Activated CD8-positive, alpha-beta T cell treated with anti-CD3 and anti-CD28 coated beads for 36 hours (primary cell): ENCODE measurements at regions of chr9 and their contacts with region 1.

Region 1: GRCh38 chr9:113578882-113579282 is 115.4 kb downstream of the RGS3 start:
- DNase-seq: peak; percentile 96
- ATAC-seq: peak; percentile 71
- H3K4me3 Mint-ChIP-seq: peak overlapping the region; percentile 85
- H3K27ac Mint-ChIP-seq: peak overlapping the region; percentile 95
- H3K4me1 Mint-ChIP-seq: peaks cover 83% of the 10 kb centered on the region
- H3K27me3 Mint-ChIP-seq: no peaks in the 10 kb centered on the region
- CTCF ChIP-seq: no peak

Region 2: GRCh38 chr9:113331780-113332179 is 247.1 kb before region 1 on chr9:
- CTCF ChIA-PET with region 1: no interaction called
- POLR2A ChIA-PET with region 1: no interaction called
- intact Hi-C with region 1: no loop called
- DNase-seq: no peak
- ATAC-seq: no peak
- H3K4me3 Mint-ChIP-seq: no peak overlapping the region
- H3K27ac Mint-ChIP-seq: no peak overlapping the region
- H3K4me1 Mint-ChIP-seq: no peaks in the 10 kb centered on the region
- H3K27me3 Mint-ChIP-seq: no peaks in the 10 kb centered on the region
- CTCF ChIP-seq: no peak

Region 3: GRCh38 chr9:113387560-113388230 is 191.2 kb before region 1 on chr9:
- CTCF ChIA-PET with region 1: no interaction called
- POLR2A ChIA-PET with region 1: no interaction called
- intact Hi-C with region 1: no loop called
- DNase-seq: no peak
- ATAC-seq: no peak
- H3K4me3 Mint-ChIP-seq: no peak overlapping the region
- H3K27ac Mint-ChIP-seq: no peak overlapping the region
- H3K4me1 Mint-ChIP-seq: no peaks in the 10 kb centered on the region
- H3K27me3 Mint-ChIP-seq: no peaks in the 10 kb centered on the region
- CTCF ChIP-seq: no peak

Region 4: DNA sequence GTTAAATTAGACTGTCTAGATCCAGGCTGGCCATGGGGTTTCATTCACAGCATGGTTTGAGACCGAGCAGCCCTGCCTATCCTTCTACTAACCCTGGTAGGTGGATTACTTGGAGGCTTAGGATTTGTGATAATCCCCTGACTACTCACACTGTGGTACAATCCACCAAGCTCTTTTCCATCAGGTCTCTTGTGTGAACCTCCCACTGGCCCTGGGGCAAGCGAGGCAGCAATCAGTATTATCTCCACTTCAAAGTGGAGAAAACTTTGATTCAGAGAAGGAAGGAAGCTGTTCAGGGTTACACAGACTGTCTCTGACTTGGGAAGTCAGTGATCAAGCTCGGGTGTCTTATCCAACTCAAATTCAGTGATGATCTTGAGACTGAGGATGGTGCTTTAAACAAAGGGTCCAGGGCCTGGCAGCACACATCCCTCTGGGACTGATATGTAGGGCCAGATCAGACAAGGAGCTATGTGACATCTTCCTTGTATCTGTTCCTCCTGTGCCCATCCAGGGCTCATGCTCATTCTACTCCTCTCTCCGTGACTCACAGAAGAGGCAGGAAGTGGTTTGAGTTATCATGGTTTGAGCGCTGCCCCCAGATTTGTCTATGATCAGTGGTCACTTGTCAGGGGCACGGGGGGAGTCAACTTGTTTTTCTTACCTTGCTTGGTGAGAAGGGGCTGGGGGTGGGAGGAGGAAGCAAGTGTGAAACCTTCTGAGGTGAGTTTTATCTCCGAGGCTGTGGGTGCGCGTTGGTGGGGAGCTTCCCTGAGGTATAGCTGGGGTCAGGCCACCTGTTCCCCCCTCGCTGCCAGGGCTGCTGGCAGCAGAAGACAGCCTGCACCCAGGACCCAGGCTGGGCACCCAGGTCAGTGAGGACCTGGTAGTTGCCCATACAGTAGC is 66.8 kb before region 1 on chr9:
- CTCF ChIA-PET with region 1: interaction called, 23 read pairs
- POLR2A ChIA-PET with region 1: interaction called, 46 read pairs
- intact Hi-C with region 1: no loop called
- DNase-seq: peak; percentile 97
- ATAC-seq: peak; percentile 74
- H3K4me3 Mint-ChIP-seq: peak overlapping the region; percentile 55
- H3K27ac Mint-ChIP-seq: peak overlapping the region; percentile 97
- H3K4me1 Mint-ChIP-seq: peaks cover 66% of the 10 kb centered on the region
- H3K27me3 Mint-ChIP-seq: no peaks in the 10 kb centered on the region
- CTCF ChIP-seq: no peak

Region 5: DNA sequence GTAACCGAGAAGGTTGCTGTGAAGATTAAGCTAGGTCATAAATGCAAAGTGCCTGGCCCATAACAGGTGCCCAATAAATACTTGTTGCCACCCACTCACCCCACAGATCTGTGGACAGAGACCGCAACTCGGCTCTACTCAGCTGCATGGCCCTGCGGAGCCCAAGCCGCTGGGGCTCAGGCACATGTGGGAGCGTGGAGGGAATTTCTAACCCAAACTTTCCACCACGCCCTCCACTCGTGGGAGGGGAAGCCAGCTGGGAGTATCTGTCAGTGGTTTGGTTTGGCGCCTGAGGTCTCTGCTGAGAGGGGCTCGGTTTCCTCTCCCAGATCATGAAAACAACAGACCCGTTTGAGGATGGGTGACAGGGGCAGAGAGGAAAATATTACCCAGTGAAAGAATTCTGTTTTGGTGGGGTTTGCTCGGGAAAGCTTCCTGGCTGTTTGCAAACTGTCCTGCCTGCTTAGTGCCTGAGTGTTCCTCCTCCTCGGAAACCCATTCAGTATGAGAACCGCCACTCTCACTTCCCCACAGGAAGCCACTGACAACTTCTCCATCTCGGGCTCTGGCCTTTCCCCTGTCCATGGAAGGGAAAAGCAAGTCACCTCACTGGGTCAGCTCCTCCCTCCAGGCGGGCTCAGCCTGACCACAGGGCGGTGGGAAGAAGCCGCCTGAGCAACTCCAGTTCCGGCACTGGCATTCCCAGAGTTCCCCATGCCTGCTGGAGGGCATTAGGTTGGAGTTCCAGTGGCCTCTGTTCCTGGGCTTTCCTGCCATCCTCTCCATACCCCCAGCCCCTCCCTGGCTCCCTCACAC is 55.3 kb before region 1 on chr9:
- CTCF ChIA-PET with region 1: interaction called, 22 read pairs
- POLR2A ChIA-PET with region 1: interaction called, 50 read pairs
- intact Hi-C with region 1: loop called (anchors 2 kb)
- DNase-seq: peak; percentile 88
- ATAC-seq: peak; percentile 52
- H3K4me3 Mint-ChIP-seq: peak overlapping the region; percentile 69
- H3K27ac Mint-ChIP-seq: peak overlapping the region; percentile 71
- H3K4me1 Mint-ChIP-seq: peaks cover 88% of the 10 kb centered on the region
- H3K27me3 Mint-ChIP-seq: no peaks in the 10 kb centered on the region
- CTCF ChIP-seq: no peak

Region 6: DNA sequence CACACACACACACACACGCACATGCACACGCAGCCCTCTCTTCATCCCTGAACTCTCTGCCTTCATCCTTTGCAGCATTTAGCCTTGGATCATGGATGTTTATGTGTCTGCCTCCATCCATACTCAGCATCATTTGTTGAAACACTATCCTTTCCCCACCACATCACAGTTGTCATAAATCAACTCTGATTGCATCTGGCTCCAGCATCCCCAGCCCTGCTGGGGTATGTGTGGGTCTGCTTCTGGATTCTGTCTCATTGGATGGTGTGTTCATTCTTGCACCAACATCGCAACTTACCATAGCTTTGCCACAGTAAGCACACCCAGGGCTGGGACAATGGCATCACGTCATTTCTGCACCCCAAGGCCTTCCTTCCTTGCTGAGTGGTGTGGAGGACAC is 60.0 kb after region 1 on chr9:
- CTCF ChIA-PET with region 1: no interaction called
- POLR2A ChIA-PET with region 1: no interaction called
- intact Hi-C with region 1: no loop called
- DNase-seq: no peak
- ATAC-seq: no peak
- H3K4me3 Mint-ChIP-seq: no peak overlapping the region
- H3K27ac Mint-ChIP-seq: no peak overlapping the region
- H3K4me1 Mint-ChIP-seq: no peaks in the 10 kb centered on the region
- H3K27me3 Mint-ChIP-seq: peaks cover 4% of the 10 kb centered on the region
- CTCF ChIP-seq: no peak